ENCODE measurements at regions of chr2 and their contacts with region 1.

Region 1: GRCh38 chr2:127891811-127892210 is 6.1 kb upstream of the AMMECR1L start:
- DNase-seq: no peak
- ATAC-seq: no peak
- H3K4me3 ChIP-seq: no peak overlapping the region
- H3K27ac ChIP-seq: no peak overlapping the region
- H3K4me1 ChIP-seq: peaks cover 5 to 18% (median 14%) of the 10 kb centered on the region in 9 donors
- H3K27me3 ChIP-seq: no peaks in the 10 kb centered on the region
- CTCF ChIP-seq: no peak

Region 2: GRCh38 chr2:127953128-127953718 is 61.4 kb after region 1 on chr2:
- intact Hi-C with region 1: loop called in 1 of 10 experiments (anchors 5 kb)
- DNase-seq: peak; percentile 35 to 68
- ATAC-seq: peak; percentile 90 to 99 (median 97)
- H3K4me3 ChIP-seq: no peak overlapping the region
- H3K27ac ChIP-seq: peak overlapping the region in 9 of 10 donors; percentile 16 to 73 (median 57)
- H3K4me1 ChIP-seq: peaks cover 0 to 21% (median 18%) of the 10 kb centered on the region in 9 donors
- H3K27me3 ChIP-seq: no peaks in the 10 kb centered on the region
- CTCF ChIP-seq: no peak

Region 3: GRCh38 chr2:127968610-127969339 is 77.0 kb after region 1 on chr2:
- intact Hi-C with region 1: no loop called
- DNase-seq: no peak
- ATAC-seq: no peak
- H3K4me3 ChIP-seq: no peak overlapping the region
- H3K27ac ChIP-seq: no peak overlapping the region
- H3K4me1 ChIP-seq: no peaks in the 10 kb centered on the region
- H3K27me3 ChIP-seq: no peaks in the 10 kb centered on the region
- CTCF ChIP-seq: no peak

Region 4: GRCh38 chr2:128027801-128028667 is 136.2 kb after region 1 on chr2 and contains the start of gene SAP130:
- intact Hi-C with region 1: loop called in 5 of 10 experiments (anchors 10 kb)
- DNase-seq: peak; percentile 98 to 99
- ATAC-seq: peak; percentile 91 to 96 (median 92)
- H3K4me3 ChIP-seq: peak within 1 kb of the TSS; percentile 82 to 99 (median 97)
- H3K27ac ChIP-seq: peak within 1 kb of the TSS; percentile 92 to 99 (median 96)
- H3K4me1 ChIP-seq: peaks cover 8 to 20% (median 16%) of the 10 kb centered on the region in 9 donors
- H3K27me3 ChIP-seq: no peaks in the 10 kb centered on the region
- CTCF ChIP-seq: peak in 2 of 9 donors; percentile 7 to 19
- total RNA-seq, gene SAP130: 12.4 to 20.4 (median 17.3) TPM

Region 5: GRCh38 chr2:128324008-128324896 is 432.4 kb after region 1 on chr2:
- intact Hi-C with region 1: no loop called
- DNase-seq: no peak
- ATAC-seq: no peak
- H3K4me3 ChIP-seq: no peak overlapping the region
- H3K27ac ChIP-seq: no peak overlapping the region
- H3K4me1 ChIP-seq: peaks cover 0 to 32% (median 17%) of the 10 kb centered on the region in 9 donors
- H3K27me3 ChIP-seq: no peaks in the 10 kb centered on the region
- CTCF ChIP-seq: no peak

Measured in heart right ventricle (tissue), 16 donors.